Calu3 (cell line): ENCODE measurements at regions of chr12 and their contacts with region 1.

Region 1: DNA sequence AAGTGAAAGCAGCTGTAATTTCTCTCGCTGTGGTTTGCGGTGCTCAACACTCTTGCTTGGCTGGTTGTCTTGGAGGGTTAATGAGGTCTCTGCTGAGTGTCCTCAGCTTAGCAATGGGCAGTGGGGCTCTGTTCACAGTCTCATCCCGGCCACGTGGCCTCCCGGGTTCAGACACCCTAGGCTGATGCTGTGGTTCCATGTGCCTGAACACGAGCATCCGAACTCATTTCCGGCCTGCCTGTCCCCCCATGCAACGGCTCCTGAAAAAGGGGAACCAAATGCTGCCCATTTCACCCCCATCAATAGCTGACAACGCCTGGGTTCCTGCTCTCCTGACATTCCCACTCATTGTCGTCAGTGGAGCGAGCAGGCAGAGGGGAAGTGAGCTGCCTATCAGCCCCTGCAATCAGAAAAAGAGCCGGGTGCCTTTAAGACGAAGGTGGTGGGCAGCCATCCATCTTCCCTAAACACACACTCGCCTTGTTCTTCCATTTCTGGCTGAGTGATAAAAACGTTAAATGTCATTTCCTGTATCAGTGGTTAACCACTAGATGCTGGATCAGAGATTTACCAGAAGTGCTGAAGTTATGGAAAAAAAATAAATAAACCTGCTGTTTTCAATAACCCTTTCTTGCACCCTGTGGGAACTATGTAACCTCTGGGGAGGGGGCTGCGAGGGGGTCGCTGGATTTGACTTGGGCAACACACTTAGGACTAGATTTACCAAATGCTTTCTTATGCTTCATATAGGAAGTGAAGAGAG is 60.3 kb upstream of the BCL2L14 start:
- DNase-seq: no peak
- H3K4me3 Mint-ChIP-seq: peak overlapping the region; percentile 15
- H3K27ac Mint-ChIP-seq: peak overlapping the region; percentile 89
- H3K4me1 Mint-ChIP-seq: peaks cover 36% of the 10 kb centered on the region
- H3K27me3 Mint-ChIP-seq: no peaks in the 10 kb centered on the region
- CTCF ChIP-seq: no peak

Region 2: DNA sequence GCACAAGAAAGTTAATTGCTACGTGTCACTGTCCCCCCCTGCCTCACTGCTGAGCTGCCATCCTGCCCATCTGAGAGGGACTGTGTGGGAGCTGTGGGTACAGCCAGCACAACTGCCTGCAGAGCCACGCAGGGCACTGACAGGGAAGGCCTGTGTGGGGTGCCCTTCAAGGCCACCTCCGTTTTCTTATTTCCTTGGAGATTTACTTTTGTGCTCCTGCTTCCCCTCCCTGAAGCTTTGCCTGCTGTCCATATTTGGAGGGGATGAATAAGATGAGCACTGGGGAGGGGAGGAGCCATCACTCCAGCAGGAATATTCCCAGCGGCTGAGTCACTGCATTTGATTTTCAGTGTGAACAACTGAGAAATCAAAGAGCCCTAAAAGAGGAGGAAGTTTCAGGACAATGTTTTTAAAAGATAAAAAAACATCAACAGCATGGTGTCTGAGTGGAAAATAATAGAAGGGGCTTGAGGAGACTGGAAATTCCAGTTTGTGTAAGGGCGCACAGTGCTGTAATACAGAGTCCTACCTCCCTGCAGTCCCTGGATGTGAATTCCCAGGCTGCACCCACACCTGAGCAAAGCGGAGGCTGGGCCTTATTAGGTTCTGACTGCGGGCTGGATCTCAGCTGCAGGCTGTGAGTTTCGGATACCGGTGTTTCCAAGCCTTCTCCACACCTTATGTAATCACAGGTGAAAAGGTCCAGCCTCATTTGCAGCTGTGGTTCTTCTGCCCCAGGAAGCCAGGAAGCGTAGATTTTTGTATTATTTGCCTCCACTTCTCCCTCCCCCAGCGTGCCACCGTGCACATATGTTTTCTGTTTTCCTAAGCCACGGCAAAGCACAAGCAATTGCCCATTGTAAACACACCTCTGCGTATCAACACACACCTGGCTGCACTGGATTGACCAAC is 132.3 kb before region 1 on chr12:
- CTCF ChIA-PET with region 1: interaction called, 5 read pairs
- intact Hi-C with region 1: loop called (anchors 5 kb)
- DNase-seq: peak; percentile 50
- H3K4me3 Mint-ChIP-seq: peak overlapping the region; percentile 49
- H3K27ac Mint-ChIP-seq: peak overlapping the region; percentile 97
- H3K4me1 Mint-ChIP-seq: peaks cover 78% of the 10 kb centered on the region
- H3K27me3 Mint-ChIP-seq: no peaks in the 10 kb centered on the region
- CTCF ChIP-seq: no peak

Region 3: GRCh38 chr12:12384571-12385340 is 374.3 kb after region 1 on chr12:
- CTCF ChIA-PET with region 1: no interaction called
- intact Hi-C with region 1: no loop called
- DNase-seq: no peak
- H3K4me3 Mint-ChIP-seq: no peak overlapping the region
- H3K27ac Mint-ChIP-seq: no peak overlapping the region
- H3K4me1 Mint-ChIP-seq: peaks cover 8% of the 10 kb centered on the region
- H3K27me3 Mint-ChIP-seq: no peaks in the 10 kb centered on the region
- CTCF ChIP-seq: no peak